MCF 10A (cell line): ENCODE measurements at regions of chr15 and their contacts with region 1.

Region 1: GRCh38 chr15:74438721-74439316 is 5.1 kb upstream of the SEMA7A start:
- DNase-seq: peak; percentile 77
- H3K4me3 Mint-ChIP-seq: no peak overlapping the region
- H3K27ac Mint-ChIP-seq: no peak overlapping the region
- H3K4me1 Mint-ChIP-seq: no peaks in the 10 kb centered on the region
- H3K27me3 Mint-ChIP-seq: no peaks in the 10 kb centered on the region
- CTCF ChIP-seq: peak; percentile 86

Region 2: GRCh38 chr15:74373731-74374647 is 64.8 kb before region 1 on chr15:
- CTCF ChIA-PET with region 1: interaction called, 47 read pairs
- POLR2A ChIA-PET with region 1: interaction called, 6 read pairs
- intact Hi-C with region 1: loop called (anchors 1 kb)
- DNase-seq: peak; percentile 92
- H3K4me3 Mint-ChIP-seq: peak overlapping the region; percentile 78
- H3K27ac Mint-ChIP-seq: no peak overlapping the region
- H3K4me1 Mint-ChIP-seq: no peaks in the 10 kb centered on the region
- H3K27me3 Mint-ChIP-seq: peaks cover 37% of the 10 kb centered on the region
- CTCF ChIP-seq: peak; percentile 82

Region 3: DNA sequence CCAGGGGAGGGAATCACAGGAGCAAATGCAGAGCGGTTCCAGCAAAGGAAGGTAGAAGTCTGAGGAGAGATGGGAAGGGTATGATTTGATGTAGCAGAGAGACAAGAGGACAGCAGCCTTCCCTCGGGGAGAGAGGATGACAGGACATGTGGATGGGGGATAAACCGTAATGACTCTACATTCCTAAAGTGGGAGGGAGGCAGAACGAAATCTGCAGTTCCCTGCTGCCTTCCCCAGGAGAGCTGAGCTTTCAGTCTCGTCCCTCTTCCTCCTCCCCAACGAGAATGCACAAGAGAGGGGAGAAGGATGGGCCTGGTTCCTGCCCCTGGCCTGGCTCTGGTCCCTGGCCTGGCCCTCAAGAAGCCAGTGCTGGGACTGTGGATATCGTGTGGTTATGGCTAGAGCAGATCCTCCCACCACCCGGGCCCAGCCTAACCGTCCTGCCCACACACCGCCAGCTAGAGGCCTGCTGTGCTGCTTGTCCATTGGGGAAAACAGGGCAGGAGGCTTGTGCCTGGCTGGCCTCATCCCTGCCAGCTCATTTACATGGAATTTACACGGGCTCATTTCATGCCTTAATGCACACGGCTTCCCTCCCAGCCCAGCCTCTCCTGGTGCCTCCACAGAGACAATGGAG is 31.6 kb before region 1 on chr15:
- CTCF ChIA-PET with region 1: interaction called, 11 read pairs
- POLR2A ChIA-PET with region 1: no interaction called
- intact Hi-C with region 1: no loop called
- DNase-seq: peak; percentile 71
- H3K4me3 Mint-ChIP-seq: no peak overlapping the region
- H3K27ac Mint-ChIP-seq: no peak overlapping the region
- H3K4me1 Mint-ChIP-seq: peaks cover 17% of the 10 kb centered on the region
- H3K27me3 Mint-ChIP-seq: no peaks in the 10 kb centered on the region
- CTCF ChIP-seq: no peak

Region 4: DNA sequence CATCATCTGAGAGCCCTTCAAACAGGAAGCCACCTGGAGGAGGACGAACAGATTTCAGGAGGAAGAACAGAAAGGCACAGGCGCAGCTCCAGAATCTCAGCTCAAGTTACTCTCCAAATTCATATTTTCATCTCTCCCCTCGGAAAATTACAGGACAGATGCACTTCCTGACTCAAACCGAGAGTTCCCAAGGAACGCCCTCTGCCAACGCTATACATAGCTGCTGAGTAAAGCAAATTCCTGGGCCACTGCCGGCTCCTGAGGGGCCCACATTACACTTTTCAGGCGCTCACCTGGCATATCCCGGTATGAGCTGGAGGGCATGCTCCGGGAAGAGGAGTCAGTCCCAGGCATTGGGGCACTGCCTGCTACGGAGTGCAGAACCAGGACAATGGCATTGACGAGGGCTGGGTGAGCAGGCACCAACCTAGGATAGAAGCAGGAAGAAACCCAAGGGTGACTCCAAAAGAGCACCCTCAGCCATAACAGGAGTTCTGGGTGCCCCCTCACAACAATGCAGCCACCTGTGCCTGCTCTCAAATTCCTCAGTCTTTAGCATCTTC is 10.9 kb after region 1 on chr15:
- CTCF ChIA-PET with region 1: interaction called, 13 read pairs
- POLR2A ChIA-PET with region 1: no interaction called
- intact Hi-C with region 1: no loop called
- DNase-seq: no peak
- H3K4me3 Mint-ChIP-seq: no peak overlapping the region
- H3K27ac Mint-ChIP-seq: no peak overlapping the region
- H3K4me1 Mint-ChIP-seq: no peaks in the 10 kb centered on the region
- H3K27me3 Mint-ChIP-seq: no peaks in the 10 kb centered on the region
- CTCF ChIP-seq: no peak

Region 5: GRCh38 chr15:74545880-74546656 is 107.2 kb after region 1 on chr15:
- CTCF ChIA-PET with region 1: interaction called, 10 read pairs
- POLR2A ChIA-PET with region 1: no interaction called
- intact Hi-C with region 1: no loop called
- DNase-seq: peak; percentile 99
- H3K4me3 Mint-ChIP-seq: no peak overlapping the region
- H3K27ac Mint-ChIP-seq: no peak overlapping the region
- H3K4me1 Mint-ChIP-seq: peaks cover 34% of the 10 kb centered on the region
- H3K27me3 Mint-ChIP-seq: peaks cover 38% of the 10 kb centered on the region
- CTCF ChIP-seq: no peak